Dorsolateral prefrontal cortex (tissue), 120 donors: ENCODE measurements at regions of chr4 and their contacts with region 1.

Region 1: GRCh38 chr4:189600718-189601435 is 339.8 kb upstream of the FRG1 start:
- DNase-seq: no peak
- H3K4me3 ChIP-seq: no peak overlapping the region
- H3K27ac ChIP-seq: no peak overlapping the region
- H3K27me3 ChIP-seq: peaks cover 0 to 13% (median 0%) of the 10 kb centered on the region in 45 donors
- CTCF ChIP-seq: no peak

Region 2: GRCh38 chr4:189420572-189420971 is 180.3 kb before region 1 on chr4:
- intact Hi-C with region 1: no loop called
- DNase-seq: no peak
- H3K4me3 ChIP-seq: no peak overlapping the region
- H3K27ac ChIP-seq: no peak overlapping the region
- H3K27me3 ChIP-seq: peaks cover 0 to 7% (median 0%) of the 10 kb centered on the region in 45 donors
- CTCF ChIP-seq: no peak

Region 3: GRCh38 chr4:189792924-189793618 is 192.2 kb after region 1 on chr4:
- intact Hi-C with region 1: loop called in 1 of 2 experiments (anchors 10 kb)
- DNase-seq: peak; percentile 52 to 84 (median 70)
- H3K4me3 ChIP-seq: peak overlapping the region in 39 of 59 donors; percentile 3 to 53 (median 37)
- H3K27ac ChIP-seq: no peak overlapping the region
- H3K27me3 ChIP-seq: peaks cover 0 to 14% (median 0%) of the 10 kb centered on the region in 45 donors
- CTCF ChIP-seq: peak; percentile 80 to 98 (median 94)